Pancreas (tissue), 10 donors: ENCODE measurements at regions of chr4 and their contacts with region 1.

Region 1: GRCh38 chr4:118348886-118349285 is 3.9 kb downstream of the PRSS12 start:
- DNase-seq: no peak
- ATAC-seq: no peak
- H3K4me3 ChIP-seq: no peak overlapping the region
- H3K27ac ChIP-seq: no peak overlapping the region
- H3K4me1 ChIP-seq: peaks cover 0 to 19% (median 0%) of the 10 kb centered on the region in 3 donors
- H3K27me3 ChIP-seq: no peaks in the 10 kb centered on the region
- CTCF ChIP-seq: no peak

Region 2: GRCh38 chr4:118280501-118281218 is 68.2 kb before region 1 on chr4:
- intact Hi-C with region 1: loop called in 2 of 3 experiments (anchors 10 kb)
- DNase-seq: peak in 4 of 6 donors; percentile 40 to 73 (median 66)
- ATAC-seq: peak; percentile 51 to 74 (median 68)
- H3K4me3 ChIP-seq: peak overlapping the region in 3 of 4 donors; percentile 77 to 97 (median 80)
- H3K27ac ChIP-seq: peak overlapping the region; percentile 8 to 44 (median 38)
- H3K4me1 ChIP-seq: peaks cover 21 to 36% (median 27%) of the 10 kb centered on the region in 3 donors
- H3K27me3 ChIP-seq: no peaks in the 10 kb centered on the region
- CTCF ChIP-seq: peak; percentile 19 to 45 (median 28)

Region 3: GRCh38 chr4:118729287-118730286 is 380.7 kb after region 1 on chr4:
- intact Hi-C with region 1: no loop called
- DNase-seq: no peak
- ATAC-seq: peak in 1 of 4 donors; percentile 30
- H3K4me3 ChIP-seq: no peak overlapping the region
- H3K27ac ChIP-seq: no peak overlapping the region
- H3K4me1 ChIP-seq: no peaks in the 10 kb centered on the region
- H3K27me3 ChIP-seq: no peaks in the 10 kb centered on the region
- CTCF ChIP-seq: no peak